ENCODE measurements at regions of chr4 and their contacts with region 1.

Region 1: GRCh38 chr4:153127760-153128494 is 76.3 kb upstream of the TRIM2 start:
- DNase-seq: peak; percentile 93
- H3K4me3 ChIP-seq: no peak overlapping the region
- H3K27ac ChIP-seq: no peak overlapping the region
- H3K4me1 ChIP-seq: no peaks in the 10 kb centered on the region
- H3K27me3 ChIP-seq: no peaks in the 10 kb centered on the region
- CTCF ChIP-seq: peak; percentile 90

Region 2: GRCh38 chr4:152408514-152409327 is 719.2 kb before region 1 on chr4:
- CTCF ChIA-PET with region 1: interaction called, 4 read pairs
- POLR2A ChIA-PET with region 1: no interaction called
- intact Hi-C with region 1: loop called (anchors 5 kb)
- DNase-seq: peak; percentile 71
- H3K4me3 ChIP-seq: no peak overlapping the region
- H3K27ac ChIP-seq: no peak overlapping the region
- H3K4me1 ChIP-seq: peaks cover 10% of the 10 kb centered on the region
- H3K27me3 ChIP-seq: no peaks in the 10 kb centered on the region
- CTCF ChIP-seq: peak; percentile 78

Region 3: DNA sequence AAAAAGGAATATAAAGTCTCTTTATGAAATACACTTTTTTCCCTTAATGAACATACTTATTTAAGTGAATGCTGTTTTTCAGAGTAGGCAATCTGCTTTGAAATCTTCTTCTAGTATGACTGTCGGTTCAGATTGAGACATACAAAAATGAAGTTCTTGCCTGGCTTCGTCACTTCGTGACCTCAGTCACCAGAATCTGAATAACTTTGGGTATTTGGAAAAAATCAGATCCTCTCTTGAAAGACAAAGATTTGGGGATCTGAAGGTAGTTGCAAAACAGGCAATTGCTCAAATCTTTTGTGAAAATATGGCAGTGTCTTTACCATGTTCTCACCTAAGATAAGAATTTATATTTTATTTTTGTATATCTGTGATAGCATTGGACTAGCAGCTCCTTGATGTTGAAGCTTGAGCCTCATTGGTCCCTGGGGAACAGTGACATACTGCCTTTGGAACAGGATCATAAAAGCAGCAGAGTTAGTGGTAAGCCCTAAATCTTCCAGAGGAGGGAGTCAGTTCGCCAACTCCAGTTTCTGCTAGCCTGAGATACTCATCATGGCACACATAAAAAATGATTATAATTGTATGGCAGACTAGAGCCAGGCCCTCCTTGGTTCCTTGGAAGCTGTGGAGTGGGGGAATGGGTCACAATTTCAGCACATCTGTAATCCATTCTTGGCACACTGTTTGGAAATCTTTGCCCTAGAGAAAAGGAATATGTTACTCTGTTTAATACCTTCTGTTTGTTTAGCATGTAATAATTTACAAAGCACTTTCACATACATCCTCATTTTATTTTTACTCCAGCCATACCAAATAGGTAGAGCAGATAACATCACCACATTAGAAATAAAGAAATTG is 343.2 kb before region 1 on chr4:
- CTCF ChIA-PET with region 1: interaction called, 3 read pairs
- POLR2A ChIA-PET with region 1: no interaction called
- intact Hi-C with region 1: loop called (anchors 5 kb)
- DNase-seq: peak; percentile 92
- H3K4me3 ChIP-seq: no peak overlapping the region
- H3K27ac ChIP-seq: no peak overlapping the region
- H3K4me1 ChIP-seq: peaks cover 26% of the 10 kb centered on the region
- H3K27me3 ChIP-seq: no peaks in the 10 kb centered on the region
- CTCF ChIP-seq: peak; percentile 63

Region 4: DNA sequence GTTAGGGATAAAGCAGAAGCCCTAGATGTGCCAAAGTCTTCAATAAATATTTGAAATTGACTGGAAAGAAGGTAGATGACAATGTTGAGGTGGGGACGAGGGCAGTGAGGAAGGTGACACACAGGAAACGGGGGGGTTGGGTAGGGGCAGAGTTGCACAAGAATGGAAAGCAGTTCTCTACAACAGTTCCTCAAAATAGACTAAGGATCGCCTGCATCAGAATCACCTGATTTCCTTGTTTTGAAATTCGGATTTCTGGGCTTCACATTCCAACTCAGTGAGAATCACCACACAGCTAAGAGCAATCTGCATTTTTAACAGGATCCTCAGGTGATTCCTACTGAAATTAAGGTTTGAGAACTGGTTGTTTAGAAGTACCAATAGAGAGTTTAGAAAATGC is 277.6 kb before region 1 on chr4:
- CTCF ChIA-PET with region 1: interaction called, 9 read pairs
- POLR2A ChIA-PET with region 1: no interaction called
- intact Hi-C with region 1: loop called (anchors 1 kb)
- DNase-seq: no peak
- H3K4me3 ChIP-seq: no peak overlapping the region
- H3K27ac ChIP-seq: no peak overlapping the region
- H3K4me1 ChIP-seq: no peaks in the 10 kb centered on the region
- H3K27me3 ChIP-seq: no peaks in the 10 kb centered on the region
- CTCF ChIP-seq: no peak

Region 5: DNA sequence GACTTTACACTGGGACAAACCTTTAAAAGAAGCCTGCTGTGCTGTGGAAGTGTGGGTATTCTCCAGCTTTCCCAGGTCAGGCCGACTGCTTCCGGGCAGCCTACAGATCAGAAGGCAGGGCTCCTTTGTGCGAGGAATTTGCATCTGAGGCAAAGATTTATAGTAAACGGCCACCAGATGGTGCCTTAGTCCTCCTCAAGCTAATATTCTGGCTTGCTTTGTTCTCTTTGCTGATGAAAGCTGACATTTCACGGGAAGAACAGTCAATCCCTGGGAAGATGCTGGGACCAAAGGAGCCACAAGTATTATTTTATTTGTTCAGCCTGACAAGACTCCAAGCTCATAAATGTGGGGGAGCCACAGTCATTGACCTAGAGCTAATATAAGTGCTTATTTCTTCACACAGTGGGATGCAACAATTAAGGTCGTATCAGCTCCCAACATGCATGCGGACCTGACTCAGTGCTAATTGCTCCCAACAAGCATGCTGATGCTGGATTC is 44.4 kb before region 1 on chr4:
- CTCF ChIA-PET with region 1: interaction called, 39 read pairs
- POLR2A ChIA-PET with region 1: no interaction called
- intact Hi-C with region 1: loop called (anchors 1 kb)
- DNase-seq: peak; percentile 88
- H3K4me3 ChIP-seq: no peak overlapping the region
- H3K27ac ChIP-seq: no peak overlapping the region
- H3K4me1 ChIP-seq: peaks cover 23% of the 10 kb centered on the region
- H3K27me3 ChIP-seq: no peaks in the 10 kb centered on the region
- CTCF ChIP-seq: peak; percentile 71

Region 6: GRCh38 chr4:153318696-153319320 is 190.9 kb after region 1 on chr4:
- CTCF ChIA-PET with region 1: interaction called, 11 read pairs
- POLR2A ChIA-PET with region 1: no interaction called
- intact Hi-C with region 1: no loop called
- DNase-seq: peak; percentile 82
- H3K4me3 ChIP-seq: no peak overlapping the region
- H3K27ac ChIP-seq: no peak overlapping the region
- H3K4me1 ChIP-seq: no peaks in the 10 kb centered on the region
- H3K27me3 ChIP-seq: no peaks in the 10 kb centered on the region
- CTCF ChIP-seq: peak; percentile 81